Psoas muscle (tissue), 8 donors: ENCODE measurements at regions of chr5 and their contacts with region 1.

Region 1: GRCh38 chr5:36739751-36740221 is 133.4 kb downstream of the SLC1A3 start:
- DNase-seq: peak; percentile 46 to 66
- ATAC-seq: peak; percentile 47 to 71 (median 62)
- H3K4me3 ChIP-seq: no peak overlapping the region
- H3K27ac ChIP-seq: no peak overlapping the region
- H3K4me1 ChIP-seq: peaks cover 6% of the 10 kb centered on the region
- H3K27me3 ChIP-seq: peaks cover 0 to 3% (median 0%) of the 10 kb centered on the region in 3 donors
- CTCF ChIP-seq: peak; percentile 59

Region 2: GRCh38 chr5:36414869-36415282 is 324.9 kb before region 1 on chr5:
- intact Hi-C with region 1: no loop called
- DNase-seq: no peak
- ATAC-seq: peak; percentile 57 to 88 (median 72)
- H3K4me3 ChIP-seq: no peak overlapping the region
- H3K27ac ChIP-seq: no peak overlapping the region
- H3K4me1 ChIP-seq: peaks cover 5% of the 10 kb centered on the region
- H3K27me3 ChIP-seq: no peaks in the 10 kb centered on the region
- CTCF ChIP-seq: peak; percentile 59

Region 3: DNA sequence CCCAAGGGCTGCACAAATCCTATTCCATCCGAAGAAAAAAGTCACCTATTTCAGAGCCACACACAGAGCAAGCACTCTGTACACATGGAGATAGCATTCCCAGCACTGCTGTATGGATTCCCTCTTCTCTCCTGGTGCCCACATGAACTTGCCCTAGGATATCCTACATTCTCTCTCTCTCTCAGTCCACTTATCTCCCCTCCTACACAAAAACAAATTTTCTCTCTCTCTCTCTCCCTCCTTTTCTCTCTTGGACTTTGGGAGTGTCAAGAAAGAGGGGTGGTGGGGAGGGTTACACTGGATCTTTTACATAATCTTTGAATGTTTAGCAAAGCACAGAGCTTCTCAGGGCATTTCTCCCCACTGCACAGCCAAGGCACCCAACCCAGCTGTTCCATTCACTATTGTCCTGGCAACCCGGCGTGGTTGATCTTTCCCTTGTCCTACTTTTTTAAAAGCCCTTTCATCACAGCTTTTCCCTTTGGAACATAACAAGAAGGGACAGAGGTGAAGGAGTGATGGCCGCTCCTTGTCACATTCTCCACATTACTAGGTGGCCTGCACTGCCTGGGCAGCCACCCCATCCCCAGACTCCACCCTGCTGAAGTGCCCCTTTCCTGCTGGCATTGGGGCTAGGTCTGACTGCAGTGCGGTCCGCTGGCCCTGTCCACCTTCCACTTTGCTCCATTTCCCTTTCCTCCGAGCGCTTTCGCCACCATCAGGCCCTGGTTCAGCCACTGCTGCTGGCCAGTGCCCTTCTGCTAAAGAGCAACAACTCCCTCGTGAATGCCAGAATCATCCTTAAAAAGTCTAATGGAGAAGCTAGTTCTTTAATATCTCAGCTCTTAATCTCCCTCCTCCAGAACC is 155.5 kb before region 1 on chr5:
- intact Hi-C with region 1: no loop called
- DNase-seq: no peak
- ATAC-seq: no peak
- H3K4me3 ChIP-seq: no peak overlapping the region
- H3K27ac ChIP-seq: no peak overlapping the region
- H3K4me1 ChIP-seq: no peaks in the 10 kb centered on the region
- H3K27me3 ChIP-seq: no peaks in the 10 kb centered on the region
- CTCF ChIP-seq: no peak

Region 4: GRCh38 chr5:36704131-36704530 is 35.7 kb before region 1 on chr5:
- intact Hi-C with region 1: loop called in 1 of 2 experiments (anchors 1 kb)
- DNase-seq: no peak
- ATAC-seq: no peak
- H3K4me3 ChIP-seq: no peak overlapping the region
- H3K27ac ChIP-seq: no peak overlapping the region
- H3K4me1 ChIP-seq: no peaks in the 10 kb centered on the region
- H3K27me3 ChIP-seq: no peaks in the 10 kb centered on the region
- CTCF ChIP-seq: no peak

Region 5: GRCh38 chr5:36854402-36855140 is 114.8 kb after region 1 on chr5:
- intact Hi-C with region 1: no loop called
- DNase-seq: no peak
- ATAC-seq: no peak
- H3K4me3 ChIP-seq: no peak overlapping the region
- H3K27ac ChIP-seq: no peak overlapping the region
- H3K4me1 ChIP-seq: no peaks in the 10 kb centered on the region
- H3K27me3 ChIP-seq: no peaks in the 10 kb centered on the region
- CTCF ChIP-seq: no peak